Heart left ventricle (tissue), 16 donors: ENCODE measurements at regions of chr4 and their contacts with region 1.

Region 1: DNA sequence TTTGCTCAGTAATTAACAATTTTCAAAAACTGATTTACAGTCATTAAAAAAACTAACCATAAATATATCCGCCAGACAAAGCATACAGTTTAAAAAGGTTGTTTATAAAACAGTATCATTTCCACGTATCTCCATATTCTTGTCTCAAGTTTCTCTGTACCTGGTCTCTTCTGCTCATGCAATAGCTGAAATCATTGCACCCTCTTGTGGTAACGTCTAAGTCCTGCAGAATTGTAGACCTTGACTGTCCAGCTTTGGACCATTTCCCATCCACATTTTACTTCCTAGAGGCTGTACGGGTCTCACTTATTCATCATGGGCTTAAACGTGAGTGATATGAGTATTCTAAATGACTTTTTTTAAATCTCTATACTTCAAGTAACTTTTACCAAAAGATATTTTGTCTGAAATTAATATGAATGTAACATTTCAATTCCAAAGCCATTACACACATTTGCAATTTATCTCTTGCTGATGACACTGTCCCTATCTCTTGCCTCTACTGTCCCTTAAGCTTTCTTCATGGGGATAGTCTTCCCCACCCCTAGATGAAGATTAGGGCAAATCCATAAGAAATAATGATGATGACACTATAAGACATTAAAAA is 118.5 kb downstream of the BTC start:
- DNase-seq: no peak
- ATAC-seq: peak in 3 of 4 donors; percentile 51 to 71 (median 69)
- H3K4me3 ChIP-seq: no peak overlapping the region
- H3K27ac ChIP-seq: no peak overlapping the region
- H3K4me1 ChIP-seq: no peaks in the 10 kb centered on the region
- H3K27me3 ChIP-seq: no peaks in the 10 kb centered on the region
- CTCF ChIP-seq: peak; percentile 42 to 73 (median 63)
- POLR2A ChIP-seq: no peak

Region 2: GRCh38 chr4:74189331-74190043 is 486.3 kb before region 1 on chr4:
- intact Hi-C with region 1: loop called in 1 of 10 experiments (anchors 5 kb)
- DNase-seq: no peak
- ATAC-seq: no peak
- H3K4me3 ChIP-seq: no peak overlapping the region
- H3K27ac ChIP-seq: no peak overlapping the region
- H3K4me1 ChIP-seq: no peaks in the 10 kb centered on the region
- H3K27me3 ChIP-seq: no peaks in the 10 kb centered on the region
- CTCF ChIP-seq: peak; percentile 47 to 79 (median 70)
- POLR2A ChIP-seq: no peak

Region 3: GRCh38 chr4:74320559-74321118 is 355.1 kb before region 1 on chr4:
- intact Hi-C with region 1: loop called in 6 of 10 experiments (anchors 2 to 5 kb)
- DNase-seq: no peak
- ATAC-seq: peak in 3 of 4 donors; percentile 26 to 49 (median 38)
- H3K4me3 ChIP-seq: no peak overlapping the region
- H3K27ac ChIP-seq: no peak overlapping the region
- H3K4me1 ChIP-seq: no peaks in the 10 kb centered on the region
- H3K27me3 ChIP-seq: peaks cover 0 to 5% (median 0%) of the 10 kb centered on the region in 9 donors
- CTCF ChIP-seq: peak in 10 of 12 donors; percentile 9 to 48 (median 34)
- POLR2A ChIP-seq: no peak

Region 4: GRCh38 chr4:74376888-74377483 is 298.8 kb before region 1 on chr4:
- intact Hi-C with region 1: loop called (anchors 2 to 5 kb)
- DNase-seq: no peak
- ATAC-seq: peak; percentile 63 to 73 (median 70)
- H3K4me3 ChIP-seq: no peak overlapping the region
- H3K27ac ChIP-seq: no peak overlapping the region
- H3K4me1 ChIP-seq: no peaks in the 10 kb centered on the region
- H3K27me3 ChIP-seq: no peaks in the 10 kb centered on the region
- CTCF ChIP-seq: peak; percentile 40 to 74 (median 62)
- POLR2A ChIP-seq: no peak

Region 5: DNA sequence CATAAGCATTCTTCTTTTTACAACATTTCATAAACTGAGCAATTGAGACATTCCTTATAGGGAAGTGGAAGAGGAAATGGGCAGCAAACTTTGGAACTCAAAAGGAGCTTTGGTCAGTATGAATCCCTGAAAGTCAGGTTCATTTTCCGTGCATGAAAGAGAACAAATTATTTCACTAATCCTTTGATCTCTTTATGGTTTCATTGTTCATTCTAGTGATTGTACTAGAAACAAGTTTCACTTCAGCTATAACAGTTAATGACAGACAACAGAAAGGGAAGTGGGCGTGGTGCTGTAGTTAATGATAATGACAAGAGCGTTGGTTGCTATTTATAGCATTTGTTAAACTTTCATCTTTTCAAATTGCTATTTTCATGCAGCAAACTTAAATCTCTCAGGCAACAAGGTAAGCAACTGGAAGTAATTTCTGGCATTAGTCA is 132.5 kb before region 1 on chr4:
- intact Hi-C with region 1: loop called in 4 of 10 experiments (anchors 10 kb)
- DNase-seq: no peak
- ATAC-seq: no peak
- H3K4me3 ChIP-seq: no peak overlapping the region
- H3K27ac ChIP-seq: no peak overlapping the region
- H3K4me1 ChIP-seq: peaks cover 0 to 24% (median 0%) of the 10 kb centered on the region in 12 donors
- H3K27me3 ChIP-seq: no peaks in the 10 kb centered on the region
- CTCF ChIP-seq: no peak
- POLR2A ChIP-seq: no peak